B cell (primary cell): ENCODE measurements at regions of chr1 and their contacts with region 1.

Region 1: DNA sequence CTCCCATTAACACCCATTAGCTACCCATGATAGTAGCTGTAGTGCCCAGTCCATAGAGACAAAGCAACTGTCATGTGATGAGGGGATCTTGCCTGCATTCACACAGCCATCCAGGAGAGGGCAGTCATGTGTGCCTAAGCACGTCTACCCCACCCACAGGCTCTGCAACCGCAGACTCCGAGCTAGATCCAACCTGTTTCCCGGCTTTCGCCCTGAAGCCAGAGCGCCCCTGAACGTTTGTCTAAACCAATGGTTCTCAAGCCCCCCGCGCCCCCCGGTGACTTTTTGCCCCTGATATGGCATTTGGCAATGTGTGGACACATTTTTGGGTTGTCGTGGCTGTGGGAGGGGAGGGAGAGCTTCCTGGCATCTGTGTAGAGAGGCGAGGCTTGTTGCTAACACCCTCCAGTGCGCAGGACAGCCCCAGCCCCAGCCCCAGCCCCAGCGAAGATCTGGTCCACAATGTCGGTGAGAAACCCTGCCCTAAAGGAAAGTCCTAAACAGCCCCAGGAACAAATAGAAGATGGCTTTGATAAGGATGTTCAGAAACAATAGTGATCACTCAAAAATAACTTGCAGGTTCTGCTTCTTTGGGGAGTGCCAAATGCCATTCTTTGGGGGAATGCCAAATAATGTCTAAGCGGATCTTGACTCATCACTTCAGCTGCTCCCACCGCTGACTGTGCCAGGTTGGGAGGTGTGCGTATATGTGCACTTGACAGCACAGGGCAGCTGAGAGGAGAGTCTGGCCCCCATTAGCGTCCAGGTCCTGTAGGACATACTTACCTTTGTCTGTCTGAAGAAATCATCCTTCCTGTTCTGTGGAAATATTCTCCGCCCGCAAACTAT is 34.5 kb downstream of the SLC44A3 start:
- DNase-seq: peak; percentile 87
- ATAC-seq: peak; percentile 98
- H3K4me3 ChIP-seq: peak overlapping the region in 4 of 5 experiments; percentile 23 to 75 (median 58)
- H3K4me3 Mint-ChIP-seq: no peak overlapping the region
- H3K27ac ChIP-seq: no peak overlapping the region
- H3K27ac Mint-ChIP-seq: no peak overlapping the region
- H3K4me1 ChIP-seq: peaks cover 5 to 6% of the 10 kb centered on the region in 2 donors
- H3K4me1 Mint-ChIP-seq: no peaks in the 10 kb centered on the region
- H3K27me3 ChIP-seq: peaks cover 0 to 6% (median 2%) of the 10 kb centered on the region in 4 experiments
- H3K27me3 Mint-ChIP-seq: peaks cover 4% of the 10 kb centered on the region
- CTCF ChIP-seq: peak; percentile 83

Region 2: DNA sequence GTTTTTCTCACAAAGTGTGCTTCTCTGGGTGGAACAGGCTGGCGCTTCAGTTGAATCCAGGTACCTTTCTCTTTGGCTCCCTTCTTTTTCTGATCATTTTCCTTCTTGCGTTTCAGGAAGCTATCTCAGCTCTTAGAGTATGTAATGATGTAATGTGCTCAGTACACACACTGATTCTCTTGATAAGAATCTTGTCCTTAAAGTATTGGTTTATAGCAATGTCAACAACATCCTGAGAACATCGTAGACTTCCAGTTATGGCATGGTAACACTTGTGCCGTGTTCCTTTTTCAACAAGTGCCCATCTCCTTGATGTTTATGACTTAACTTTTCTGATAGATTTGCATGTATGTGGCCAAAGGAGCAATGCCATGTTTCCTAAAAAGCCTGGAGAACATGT is 448.2 kb before region 1 on chr1:
- CTCF ChIA-PET with region 1: no interaction called
- POLR2A ChIA-PET with region 1: interaction called, 15 read pairs
- intact Hi-C with region 1: no loop called
- DNase-seq: no peak
- ATAC-seq: no peak
- H3K4me3 ChIP-seq: no peak overlapping the region
- H3K4me3 Mint-ChIP-seq: no peak overlapping the region
- H3K27ac ChIP-seq: no peak overlapping the region
- H3K27ac Mint-ChIP-seq: no peak overlapping the region
- H3K4me1 ChIP-seq: no peaks in the 10 kb centered on the region
- H3K4me1 Mint-ChIP-seq: peaks cover 5% of the 10 kb centered on the region
- H3K27me3 ChIP-seq: peaks cover 0 to 13% (median 0%) of the 10 kb centered on the region in 4 experiments
- H3K27me3 Mint-ChIP-seq: peaks cover 35% of the 10 kb centered on the region
- CTCF ChIP-seq: no peak

Region 3: GRCh38 chr1:94903280-94904009 is 48.8 kb after region 1 on chr1:
- CTCF ChIA-PET with region 1: interaction called, 13 read pairs
- POLR2A ChIA-PET with region 1: no interaction called
- intact Hi-C with region 1: no loop called
- DNase-seq: no peak
- ATAC-seq: no peak
- H3K4me3 ChIP-seq: no peak overlapping the region
- H3K4me3 Mint-ChIP-seq: no peak overlapping the region
- H3K27ac ChIP-seq: no peak overlapping the region
- H3K27ac Mint-ChIP-seq: no peak overlapping the region
- H3K4me1 ChIP-seq: no peaks in the 10 kb centered on the region
- H3K4me1 Mint-ChIP-seq: no peaks in the 10 kb centered on the region
- H3K27me3 ChIP-seq: no peaks in the 10 kb centered on the region
- H3K27me3 Mint-ChIP-seq: no peaks in the 10 kb centered on the region
- CTCF ChIP-seq: no peak

Region 4: GRCh38 chr1:95035536-95035935 is 180.9 kb after region 1 on chr1:
- CTCF ChIA-PET with region 1: interaction called, 243 read pairs
- POLR2A ChIA-PET with region 1: no interaction called
- intact Hi-C with region 1: no loop called
- DNase-seq: no peak
- ATAC-seq: no peak
- H3K4me3 ChIP-seq: no peak overlapping the region
- H3K4me3 Mint-ChIP-seq: no peak overlapping the region
- H3K27ac ChIP-seq: no peak overlapping the region
- H3K27ac Mint-ChIP-seq: no peak overlapping the region
- H3K4me1 ChIP-seq: no peaks in the 10 kb centered on the region
- H3K4me1 Mint-ChIP-seq: no peaks in the 10 kb centered on the region
- H3K27me3 ChIP-seq: no peaks in the 10 kb centered on the region
- H3K27me3 Mint-ChIP-seq: no peaks in the 10 kb centered on the region
- CTCF ChIP-seq: no peak

Region 5: DNA sequence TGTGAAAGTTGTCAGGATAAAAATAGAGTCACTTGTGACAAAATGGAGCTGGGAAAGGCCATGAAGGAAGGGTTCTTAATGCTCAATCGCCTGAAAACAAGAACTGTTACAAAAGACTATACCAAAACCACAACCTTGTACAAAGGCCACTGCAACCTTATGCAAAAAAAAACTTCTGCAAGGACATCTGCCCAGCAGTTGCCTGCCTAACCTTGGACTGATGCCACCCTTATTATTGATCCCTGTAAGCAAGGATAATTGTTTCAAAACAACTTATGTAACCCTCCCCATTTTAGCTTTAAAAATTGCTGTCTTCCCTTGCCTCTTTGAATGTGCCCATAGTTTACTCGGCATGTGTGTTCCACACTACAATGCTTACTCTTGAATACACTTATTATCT is 212.4 kb after region 1 on chr1:
- CTCF ChIA-PET with region 1: interaction called, 33 read pairs
- POLR2A ChIA-PET with region 1: no interaction called
- intact Hi-C with region 1: loop called (anchors 1 kb)
- DNase-seq: no peak
- ATAC-seq: no peak
- H3K4me3 ChIP-seq: no peak overlapping the region
- H3K4me3 Mint-ChIP-seq: no peak overlapping the region
- H3K27ac ChIP-seq: no peak overlapping the region
- H3K27ac Mint-ChIP-seq: no peak overlapping the region
- H3K4me1 ChIP-seq: peaks cover 4 to 6% of the 10 kb centered on the region in 2 donors
- H3K4me1 Mint-ChIP-seq: peaks cover 10% of the 10 kb centered on the region
- H3K27me3 ChIP-seq: no peaks in the 10 kb centered on the region
- H3K27me3 Mint-ChIP-seq: no peaks in the 10 kb centered on the region
- CTCF ChIP-seq: no peak

Region 6: GRCh38 chr1:95233737-95234500 is 379.2 kb after region 1 on chr1 and contains the start of gene RWDD3:
- CTCF ChIA-PET with region 1: interaction called, 31 read pairs
- POLR2A ChIA-PET with region 1: no interaction called
- intact Hi-C with region 1: loop called (anchors 1 kb)
- DNase-seq: peak; percentile 95
- ATAC-seq: peak; percentile 96
- H3K4me3 ChIP-seq: peak within 1 kb of the TSS; percentile 55 to 86 (median 78)
- H3K4me3 Mint-ChIP-seq: peak within 1 kb of the TSS; percentile 87
- H3K27ac ChIP-seq: peak within 1 kb of the TSS; percentile 63 to 73
- H3K27ac Mint-ChIP-seq: peak within 1 kb of the TSS; percentile 89
- H3K4me1 ChIP-seq: peaks cover 10 to 11% of the 10 kb centered on the region in 2 donors
- H3K4me1 Mint-ChIP-seq: peaks cover 35% of the 10 kb centered on the region
- H3K27me3 ChIP-seq: peaks cover 0 to 10% (median 4%) of the 10 kb centered on the region in 4 experiments
- H3K27me3 Mint-ChIP-seq: peaks cover 10% of the 10 kb centered on the region
- CTCF ChIP-seq: peak; percentile 82
- total RNA-seq, gene RWDD3: 21.9 and 28.1 TPM in 2 replicates